BJ (cell line): ENCODE measurements at regions of chr2 and their contacts with region 1.

Region 1: GRCh38 chr2:195656859-195657633 is at the start of gene SLC39A10:
- DNase-seq: peak; percentile 92
- H3K4me3 ChIP-seq: peak within 1 kb of the TSS; percentile 79
- H3K27me3 ChIP-seq: no peaks in the 10 kb centered on the region
- CTCF ChIP-seq: no peak
- polyA plus RNA-seq, gene SLC39A10: 13.7 and 25.7 TPM in 2 replicates

Region 2: GRCh38 chr2:195612611-195613495 is 44.2 kb before region 1 on chr2:
- CTCF ChIA-PET with region 1: interaction called, 4 read pairs
- POLR2A ChIA-PET with region 1: interaction called, 10 read pairs
- DNase-seq: peak; percentile 41
- H3K4me3 ChIP-seq: peak overlapping the region; percentile 27
- H3K27me3 ChIP-seq: no peaks in the 10 kb centered on the region
- CTCF ChIP-seq: no peak